Ascending aorta (tissue), 2 donors: ENCODE measurements at regions of chrX and their contacts with region 1.

Region 1: GRCh38 chrX:49043220-49043986 is at the start of gene TFE3:
- DNase-seq: peak; percentile 98 to 99
- H3K4me3 ChIP-seq: peak within 1 kb of the TSS; percentile 68 to 73
- H3K27ac ChIP-seq: peak within 1 kb of the TSS; percentile 95 to 98
- H3K4me1 ChIP-seq: peaks cover 0 to 3% of the 10 kb centered on the region in 2 donors
- H3K27me3 ChIP-seq: no peaks in the 10 kb centered on the region
- CTCF ChIP-seq: peak; percentile 34 to 62 (median 36)
- total RNA-seq, gene TFE3: 141 TPM

Region 2: DNA sequence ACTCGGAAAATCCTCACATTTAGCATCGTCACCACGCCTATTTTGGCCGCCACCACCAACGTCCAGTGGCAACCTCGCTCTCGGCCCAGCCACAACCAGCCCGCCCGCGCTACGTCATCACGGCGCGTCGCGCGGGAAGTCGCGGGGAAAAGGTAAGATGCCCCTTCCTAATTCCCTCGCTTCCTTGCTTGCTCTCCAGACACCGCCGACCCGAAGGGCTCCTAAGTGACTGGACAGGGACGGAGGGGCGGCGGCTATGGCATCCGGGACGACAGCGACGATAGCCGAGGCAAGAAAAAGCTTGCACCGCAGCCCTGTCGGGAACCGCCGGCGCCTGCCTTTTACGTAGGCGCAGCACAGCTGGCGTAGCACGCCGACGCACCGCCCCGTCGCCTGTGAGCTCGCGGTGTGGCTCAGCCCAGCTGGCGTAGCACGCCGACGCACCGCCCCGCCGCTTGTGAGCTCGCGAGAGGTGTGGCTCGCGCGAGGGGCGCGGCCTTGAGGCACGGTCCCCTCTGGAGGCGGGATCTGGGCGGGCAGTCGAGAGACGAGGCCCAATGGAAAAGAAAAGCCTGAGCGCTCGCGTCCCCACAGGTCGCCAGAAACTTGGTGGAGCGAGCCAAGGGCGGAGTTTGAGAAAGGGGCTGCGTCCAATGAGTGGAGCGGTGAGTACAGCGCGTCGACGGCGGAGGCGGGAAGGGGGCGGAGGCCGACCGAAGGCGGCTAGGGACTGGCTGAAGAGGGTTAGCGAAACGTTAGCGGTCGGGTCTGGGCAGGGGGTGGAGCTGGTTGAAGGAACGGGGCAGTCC is 241.9 kb before region 1 on chrX and contains the start of gene HDAC6:
- intact Hi-C with region 1: loop called (anchors 5 kb)
- DNase-seq: peak; percentile 93 to 98
- H3K4me3 ChIP-seq: peak within 1 kb of the TSS; percentile 68 to 73
- H3K27ac ChIP-seq: peak within 1 kb of the TSS; percentile 96 to 97
- H3K4me1 ChIP-seq: no peaks in the 10 kb centered on the region
- H3K27me3 ChIP-seq: no peaks in the 10 kb centered on the region
- CTCF ChIP-seq: no peak
- total RNA-seq, gene HDAC6: 157 TPM

Region 3: GRCh38 chrX:48917139-48918001 is 126.0 kb before region 1 on chrX:
- intact Hi-C with region 1: loop called (anchors 1 kb)
- DNase-seq: peak; percentile 69 to 96
- H3K4me3 ChIP-seq: peak overlapping the region; percentile 36 to 74
- H3K27ac ChIP-seq: peak overlapping the region; percentile 74 to 91
- H3K4me1 ChIP-seq: peaks cover 0 to 3% of the 10 kb centered on the region in 2 donors
- H3K27me3 ChIP-seq: no peaks in the 10 kb centered on the region
- CTCF ChIP-seq: peak; percentile 89 to 92 (median 91)

Region 4: GRCh38 chrX:49002091-49002935 is 41.1 kb before region 1 on chrX and contains the start of gene GRIPAP1:
- intact Hi-C with region 1: loop called (anchors 1 kb)
- DNase-seq: peak; percentile 12 to 83
- H3K4me3 ChIP-seq: peak within 1 kb of the TSS; percentile 59 to 66
- H3K27ac ChIP-seq: peak within 1 kb of the TSS; percentile 65 to 78
- H3K4me1 ChIP-seq: peaks cover 0 to 4% of the 10 kb centered on the region in 2 donors
- H3K27me3 ChIP-seq: no peaks in the 10 kb centered on the region
- CTCF ChIP-seq: no peak
- total RNA-seq, gene GRIPAP1: 15.0 TPM

Region 5: DNA sequence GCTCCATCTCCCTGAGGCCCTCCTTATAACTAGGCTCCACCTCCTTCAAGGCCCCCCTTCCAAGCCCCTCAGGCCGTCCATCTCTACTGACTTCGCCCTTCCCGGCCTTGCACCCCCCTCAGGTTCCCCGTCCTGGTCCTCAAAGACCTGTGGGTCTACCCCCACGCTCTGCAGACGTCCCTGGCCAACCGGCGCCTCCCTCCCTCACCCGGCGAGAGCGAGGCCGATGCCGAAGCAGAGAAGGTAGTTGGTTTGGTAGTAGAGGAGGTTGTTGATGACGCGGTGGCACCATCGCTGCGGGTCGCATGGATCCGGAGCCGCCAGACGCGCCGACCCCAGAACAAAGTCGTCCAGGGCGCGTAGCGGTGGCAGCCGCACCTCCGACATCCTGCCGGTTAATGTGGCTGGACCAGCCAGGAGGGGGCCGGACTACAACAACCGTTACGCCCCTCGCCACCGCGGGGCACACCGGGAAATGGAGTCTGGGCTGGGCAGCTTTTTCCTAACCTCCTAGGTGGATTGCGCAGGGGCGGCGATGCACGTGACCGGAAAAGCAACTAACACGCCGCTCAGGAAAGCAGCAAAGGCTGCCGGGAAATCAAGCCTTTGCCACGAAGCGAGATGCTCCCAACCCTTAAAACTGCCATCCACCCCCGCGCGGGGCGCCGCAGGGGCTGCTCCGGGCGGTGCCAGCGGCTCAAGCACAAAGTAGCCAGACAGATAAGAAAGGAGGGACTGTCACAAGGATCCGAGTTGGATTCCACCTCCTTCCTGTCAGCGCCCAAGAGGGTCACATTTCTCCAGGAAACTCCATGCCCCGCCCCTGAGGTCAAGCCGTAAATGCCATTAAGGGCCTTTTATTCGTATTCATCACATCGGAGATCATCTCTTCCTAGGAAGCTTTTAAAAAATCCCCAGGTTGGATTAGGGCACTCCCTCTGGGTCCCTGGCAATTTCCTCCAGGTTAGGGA is 30.5 kb after region 1 on chrX and contains the start of gene PRAF2:
- intact Hi-C with region 1: loop called (anchors 1 kb)
- DNase-seq: peak; percentile 79 to 97
- H3K4me3 ChIP-seq: peak within 1 kb of the TSS; percentile 63 to 72
- H3K27ac ChIP-seq: peak within 1 kb of the TSS; percentile 79 to 86
- H3K4me1 ChIP-seq: peaks cover 0 to 5% of the 10 kb centered on the region in 2 donors
- H3K27me3 ChIP-seq: no peaks in the 10 kb centered on the region
- CTCF ChIP-seq: no peak
- total RNA-seq, gene PRAF2: 48.4 TPM

Region 6: DNA sequence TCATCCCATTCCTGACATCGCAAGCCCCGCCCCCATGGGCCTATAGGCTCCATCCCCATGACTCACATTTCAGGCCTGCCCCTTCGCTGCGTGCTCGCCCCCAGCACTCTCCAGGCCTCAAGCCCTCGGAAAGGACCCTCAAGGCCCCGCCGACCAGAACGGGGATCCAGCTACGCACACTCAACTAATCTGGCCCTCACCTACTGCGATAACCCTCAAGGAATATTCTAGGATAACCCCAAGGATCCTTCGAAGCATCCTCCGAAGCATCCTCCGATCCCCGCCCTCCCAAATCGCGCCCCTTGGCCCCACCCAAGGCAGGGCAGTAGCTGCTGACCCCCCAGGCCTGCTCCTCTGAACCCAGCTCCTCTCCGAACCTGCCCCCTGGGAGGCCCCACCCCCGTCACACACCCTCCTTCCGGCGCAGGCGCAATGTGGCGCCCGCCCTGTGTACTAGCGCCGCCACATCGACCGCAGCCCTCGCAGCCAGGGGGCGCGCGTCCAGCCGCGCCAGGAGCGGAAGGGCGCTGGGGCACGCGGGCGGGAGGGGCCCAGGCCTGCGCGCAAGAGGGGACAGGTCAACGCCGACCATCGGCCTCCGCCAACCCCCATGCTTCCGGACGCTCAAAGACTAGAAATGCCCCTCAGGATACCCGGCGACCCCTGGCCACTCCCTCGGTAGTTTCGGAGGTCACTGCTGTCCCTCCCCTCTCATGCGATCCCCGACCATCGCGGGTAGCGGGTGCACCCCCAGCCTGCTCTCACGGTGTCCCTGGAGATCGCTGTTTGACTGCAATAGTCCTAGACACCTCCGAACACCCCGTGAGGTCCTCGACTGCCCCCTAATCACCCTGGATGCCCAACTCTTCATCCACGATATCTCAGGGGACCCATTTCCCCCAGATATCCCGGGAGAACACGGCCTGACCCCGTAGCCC is 112.8 kb after region 1 on chrX:
- intact Hi-C with region 1: loop called (anchors 5 kb)
- DNase-seq: peak; percentile 76 to 93
- H3K4me3 ChIP-seq: peak overlapping the region; percentile 50 to 65
- H3K27ac ChIP-seq: peak overlapping the region; percentile 95 to 97
- H3K4me1 ChIP-seq: no peaks in the 10 kb centered on the region
- H3K27me3 ChIP-seq: no peaks in the 10 kb centered on the region
- CTCF ChIP-seq: peak; percentile 58 to 79 (median 74)